Breast epithelium (tissue), 4 donors: ENCODE measurements at regions of chr13 and their contacts with region 1.

Region 1: DNA sequence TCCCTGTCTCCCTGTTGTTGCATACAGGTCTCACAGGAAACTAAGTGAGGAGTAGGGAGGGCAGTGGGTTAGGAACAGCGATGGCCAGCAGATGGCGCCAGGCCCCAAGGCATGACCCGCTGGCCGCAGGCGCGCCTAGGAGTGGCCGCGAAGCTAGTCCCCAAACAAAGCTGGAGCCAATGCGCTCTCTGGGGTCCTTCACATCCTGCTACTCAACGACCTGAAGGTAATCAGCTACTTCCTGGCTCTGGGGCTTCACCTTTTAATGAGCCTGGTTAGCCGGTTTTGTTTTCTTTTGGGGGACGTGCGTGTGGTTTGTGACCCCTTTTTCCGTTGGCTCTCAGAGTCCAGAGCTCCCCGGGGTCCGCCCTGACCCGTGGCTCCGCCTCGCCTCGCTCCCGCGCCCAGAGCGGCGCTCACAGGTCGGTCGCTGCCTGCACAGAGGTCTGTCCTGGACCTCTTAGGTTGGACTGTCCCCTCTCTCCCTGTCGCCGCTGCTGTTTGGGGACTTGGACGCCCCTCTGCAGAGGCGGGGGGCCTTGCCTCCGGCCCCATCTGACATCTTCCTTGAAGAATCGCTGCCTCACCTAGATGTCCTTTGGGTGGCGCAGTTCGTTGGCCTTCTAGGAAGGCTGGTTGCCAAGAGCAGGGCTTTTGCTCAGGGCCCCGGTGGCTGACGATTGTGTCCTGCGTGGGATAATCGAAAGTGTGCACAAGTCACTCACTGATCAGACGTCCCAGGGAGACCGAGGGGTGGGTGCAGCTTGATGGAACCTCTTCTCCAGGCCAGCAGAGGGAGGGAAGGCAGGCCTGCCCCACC is 62.1 kb upstream of the GTF3A start:
- DNase-seq: peak; percentile 73 to 80
- H3K4me3 ChIP-seq: peak overlapping the region; percentile 38 to 68 (median 43)
- H3K27ac ChIP-seq: no peak overlapping the region
- H3K4me1 ChIP-seq: no peaks in the 10 kb centered on the region
- H3K27me3 ChIP-seq: peaks cover 0 to 6% of the 10 kb centered on the region in 2 donors
- CTCF ChIP-seq: peak; percentile 50 to 84 (median 81)
- POLR2A ChIP-seq: no peak

Region 2: DNA sequence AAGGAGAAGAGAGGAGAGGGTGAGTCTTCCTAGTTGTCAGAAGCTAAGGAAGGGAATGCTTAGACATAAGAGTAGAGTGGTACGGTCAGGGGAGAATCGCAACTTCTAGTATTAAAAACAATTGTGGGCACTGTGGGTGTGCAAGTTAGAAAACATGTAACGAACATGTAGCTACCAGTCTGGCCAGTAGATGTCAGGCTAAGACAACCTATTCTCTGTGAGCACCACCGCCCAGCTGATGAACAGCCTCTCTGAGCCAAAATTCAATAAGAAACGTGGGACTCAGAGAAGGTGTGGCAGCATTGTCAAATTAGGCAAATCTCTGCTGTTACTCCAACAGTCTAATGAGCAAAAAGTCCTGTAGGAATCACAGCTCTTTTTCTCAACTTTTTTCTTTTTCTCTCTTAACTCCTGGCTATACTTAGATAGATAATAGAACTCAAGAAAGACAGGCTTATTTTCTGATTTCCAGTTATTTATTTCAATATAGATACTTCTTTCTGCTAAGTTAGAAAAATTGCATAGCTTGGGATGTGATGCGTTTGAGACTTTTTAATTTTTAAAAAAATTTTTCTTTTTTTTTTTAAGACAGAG is 376.9 kb before region 1 on chr13:
- intact Hi-C with region 1: loop called (anchors 10 kb)
- DNase-seq: peak; percentile 52 to 60
- H3K4me3 ChIP-seq: no peak overlapping the region
- H3K27ac ChIP-seq: no peak overlapping the region
- H3K4me1 ChIP-seq: no peaks in the 10 kb centered on the region
- H3K27me3 ChIP-seq: no peaks in the 10 kb centered on the region
- CTCF ChIP-seq: peak; percentile 73 to 93 (median 81)
- POLR2A ChIP-seq: no peak

Region 3: GRCh38 chr13:27329210-27329609 is 33.1 kb before region 1 on chr13:
- intact Hi-C with region 1: no loop called
- DNase-seq: no peak
- H3K4me3 ChIP-seq: no peak overlapping the region
- H3K27ac ChIP-seq: no peak overlapping the region
- H3K4me1 ChIP-seq: no peaks in the 10 kb centered on the region
- H3K27me3 ChIP-seq: no peaks in the 10 kb centered on the region
- CTCF ChIP-seq: no peak
- POLR2A ChIP-seq: no peak

Region 4: DNA sequence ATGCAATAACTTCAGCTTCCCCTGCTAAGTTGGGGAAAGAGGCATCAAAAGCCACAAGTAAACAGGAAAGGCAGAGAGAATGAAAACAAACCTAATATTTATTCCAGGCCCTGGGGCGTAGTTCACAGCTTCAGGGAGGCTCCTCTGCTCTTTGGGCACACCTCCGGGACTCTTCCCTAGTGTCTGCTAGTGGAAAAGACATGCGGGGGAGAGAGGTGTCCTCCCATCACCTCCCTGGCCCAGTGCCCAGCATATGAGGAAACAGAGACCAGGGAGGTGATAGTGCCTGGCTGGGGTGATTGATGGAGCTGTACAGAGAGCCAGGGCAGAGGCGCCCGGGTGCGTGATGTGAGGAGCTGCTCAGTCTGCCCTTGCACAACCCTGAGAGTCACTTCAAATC is 20.7 kb before region 1 on chr13:
- intact Hi-C with region 1: no loop called
- DNase-seq: no peak
- H3K4me3 ChIP-seq: no peak overlapping the region
- H3K27ac ChIP-seq: no peak overlapping the region
- H3K4me1 ChIP-seq: no peaks in the 10 kb centered on the region
- H3K27me3 ChIP-seq: peaks cover 0 to 8% of the 10 kb centered on the region in 2 donors
- CTCF ChIP-seq: no peak
- POLR2A ChIP-seq: no peak

Region 5: GRCh38 chr13:27783111-27783510 is 420.8 kb after region 1 on chr13:
- intact Hi-C with region 1: loop called (anchors 2 kb)
- DNase-seq: no peak
- H3K4me3 ChIP-seq: no peak overlapping the region
- H3K27ac ChIP-seq: no peak overlapping the region
- H3K4me1 ChIP-seq: no peaks in the 10 kb centered on the region
- H3K27me3 ChIP-seq: peaks cover 0 to 6% of the 10 kb centered on the region in 2 donors
- CTCF ChIP-seq: peak in 1 of 3 donors; percentile 25
- POLR2A ChIP-seq: no peak

Region 6: GRCh38 chr13:27826379-27827353 is 464.4 kb after region 1 on chr13:
- intact Hi-C with region 1: loop called (anchors 10 kb)
- DNase-seq: peak; percentile 64 to 80
- H3K4me3 ChIP-seq: peak overlapping the region in 2 of 3 donors; percentile 20 to 44
- H3K27ac ChIP-seq: no peak overlapping the region
- H3K4me1 ChIP-seq: no peaks in the 10 kb centered on the region
- H3K27me3 ChIP-seq: peaks cover 0 to 72% of the 10 kb centered on the region in 2 donors
- CTCF ChIP-seq: peak; percentile 82 to 94 (median 87)
- POLR2A ChIP-seq: no peak

Region 7: GRCh38 chr13:27977476-27978300 is 615.4 kb after region 1 on chr13:
- intact Hi-C with region 1: loop called (anchors 10 kb)
- DNase-seq: no peak
- H3K4me3 ChIP-seq: peak overlapping the region in 1 of 3 donors; percentile 40
- H3K27ac ChIP-seq: no peak overlapping the region
- H3K4me1 ChIP-seq: peaks cover 5 to 6% of the 10 kb centered on the region in 2 donors
- H3K27me3 ChIP-seq: peaks cover 0 to 98% of the 10 kb centered on the region in 2 donors
- CTCF ChIP-seq: no peak
- POLR2A ChIP-seq: no peak